ENCODE measurements at regions of chr4 and their contacts with region 1.

Region 1: GRCh38 chr4:113684534-113685091 is 76.9 kb downstream of the CAMK2D start:
- DNase-seq: peak; percentile 72
- H3K4me3 Mint-ChIP-seq: peak overlapping the region; percentile 42
- H3K27ac Mint-ChIP-seq: peak overlapping the region; percentile 93
- H3K4me1 Mint-ChIP-seq: peaks cover 71% of the 10 kb centered on the region
- H3K27me3 Mint-ChIP-seq: no peaks in the 10 kb centered on the region

Region 2: GRCh38 chr4:112284662-112285411 is 1399.8 kb before region 1 on chr4:
- CTCF ChIA-PET with region 1: no interaction called
- POLR2A ChIA-PET with region 1: no interaction called
- intact Hi-C with region 1: loop called (anchors 5 kb)
- DNase-seq: peak; percentile 39
- H3K4me3 Mint-ChIP-seq: peak overlapping the region; percentile 94
- H3K27ac Mint-ChIP-seq: peak overlapping the region; percentile 97
- H3K4me1 Mint-ChIP-seq: peaks cover 69% of the 10 kb centered on the region
- H3K27me3 Mint-ChIP-seq: no peaks in the 10 kb centered on the region

Region 3: DNA sequence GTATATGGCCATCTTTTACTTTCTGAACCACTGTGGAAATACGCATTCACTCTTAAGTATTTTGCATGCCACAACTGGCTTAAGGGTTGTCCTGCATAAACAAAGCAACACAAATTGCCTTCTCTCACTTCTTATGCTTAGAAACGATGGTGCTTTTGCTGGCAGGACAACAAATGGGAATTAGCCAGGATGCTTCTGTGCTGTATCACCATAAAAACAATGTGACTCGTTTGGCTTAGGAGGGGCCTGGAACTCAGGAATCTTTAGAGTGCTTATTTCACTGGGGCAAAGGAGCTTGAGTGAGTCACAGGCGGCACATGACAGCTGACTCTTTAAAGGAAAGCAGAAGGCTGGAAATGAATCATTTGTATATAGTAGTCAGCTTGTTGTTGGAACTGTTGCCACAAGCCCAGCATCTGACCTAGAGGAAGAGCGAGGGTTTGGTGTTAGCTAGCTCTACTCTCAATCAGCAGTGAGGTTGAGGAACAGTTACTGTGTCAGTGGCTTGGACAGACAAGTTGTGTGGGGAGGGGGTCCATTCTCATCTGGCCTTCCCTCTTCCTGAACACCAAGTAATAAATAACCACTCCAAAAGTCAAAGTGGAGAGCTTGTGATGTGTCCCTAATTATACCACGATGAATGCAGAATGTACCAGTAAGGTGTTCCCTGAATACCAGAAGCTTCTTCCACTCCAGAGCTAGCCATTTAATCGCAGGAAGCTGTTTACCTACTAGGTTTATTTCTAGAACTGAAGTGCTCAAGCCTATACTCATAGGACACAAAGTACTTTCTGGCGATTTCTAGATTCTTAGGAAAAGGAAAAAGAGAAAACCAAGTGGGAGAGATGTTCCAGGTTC is 216.2 kb before region 1 on chr4:
- CTCF ChIA-PET with region 1: no interaction called
- POLR2A ChIA-PET with region 1: interaction called, 4 read pairs
- intact Hi-C with region 1: loop called (anchors 2 kb)
- DNase-seq: peak; percentile 66
- H3K4me3 Mint-ChIP-seq: no peak overlapping the region
- H3K27ac Mint-ChIP-seq: peak overlapping the region; percentile 61
- H3K4me1 Mint-ChIP-seq: peaks cover 30% of the 10 kb centered on the region
- H3K27me3 Mint-ChIP-seq: no peaks in the 10 kb centered on the region

Region 4: GRCh38 chr4:113547487-113548042 is 137.0 kb before region 1 on chr4:
- CTCF ChIA-PET with region 1: interaction called, 12 read pairs
- POLR2A ChIA-PET with region 1: interaction called, 4 read pairs
- intact Hi-C with region 1: loop called (anchors 1 kb)
- DNase-seq: peak; percentile 95
- H3K4me3 Mint-ChIP-seq: peak overlapping the region; percentile 12
- H3K27ac Mint-ChIP-seq: peak overlapping the region; percentile 21
- H3K4me1 Mint-ChIP-seq: peaks cover 21% of the 10 kb centered on the region
- H3K27me3 Mint-ChIP-seq: no peaks in the 10 kb centered on the region

Region 5: DNA sequence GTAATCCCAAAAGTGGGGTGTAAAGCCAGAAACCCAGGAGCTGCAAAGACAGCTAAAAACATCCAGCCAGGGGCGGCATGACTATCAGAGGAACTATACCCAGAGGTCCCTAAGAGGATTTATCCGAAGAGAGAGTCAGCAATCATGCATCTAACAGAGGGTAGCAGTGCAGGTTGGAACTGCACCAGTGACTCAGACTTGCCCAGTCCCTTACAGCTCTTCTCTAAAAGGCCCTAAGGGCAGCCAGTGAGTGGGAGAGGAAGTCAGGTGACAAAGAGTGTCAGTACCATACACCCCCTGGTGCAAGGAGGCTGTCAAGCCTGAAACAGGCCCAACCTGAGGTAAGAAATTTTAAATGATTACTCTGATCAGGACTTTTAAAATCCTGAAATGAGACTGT is 11.2 kb before region 1 on chr4:
- CTCF ChIA-PET with region 1: interaction called, 7 read pairs
- POLR2A ChIA-PET with region 1: interaction called, 3 read pairs
- intact Hi-C with region 1: loop called (anchors 1 kb)
- DNase-seq: peak; percentile 74
- H3K4me3 Mint-ChIP-seq: no peak overlapping the region
- H3K27ac Mint-ChIP-seq: peak overlapping the region; percentile 58
- H3K4me1 Mint-ChIP-seq: peaks cover 47% of the 10 kb centered on the region
- H3K27me3 Mint-ChIP-seq: no peaks in the 10 kb centered on the region

Region 6: DNA sequence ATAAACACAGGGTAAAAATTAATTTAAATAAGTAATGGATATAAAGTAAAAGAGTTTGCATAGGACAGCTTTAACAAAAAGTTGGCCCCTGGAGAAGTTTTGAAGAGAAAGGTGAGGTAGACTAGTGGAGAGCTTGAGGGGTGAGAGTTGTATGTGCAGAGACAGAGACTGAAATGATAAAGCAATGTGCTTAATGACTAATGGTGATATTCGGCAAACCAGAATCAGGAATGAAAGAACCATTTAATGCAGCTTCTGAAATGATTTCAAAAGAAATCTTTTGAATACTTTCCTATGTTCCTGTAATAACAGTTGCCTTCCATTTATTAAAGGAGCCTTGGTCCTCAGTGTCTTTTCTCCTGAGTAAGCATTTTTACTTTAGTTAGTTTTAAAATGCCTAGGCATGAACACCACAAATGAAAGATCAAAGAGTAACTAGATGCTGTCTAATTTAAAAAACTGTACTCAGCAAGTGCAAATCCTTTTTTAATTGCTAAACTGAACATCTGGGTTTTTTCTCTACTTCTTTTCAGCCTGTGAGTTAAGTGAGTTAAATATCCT is 48.4 kb after region 1 on chr4:
- CTCF ChIA-PET with region 1: interaction called, 4 read pairs
- POLR2A ChIA-PET with region 1: interaction called, 5 read pairs
- intact Hi-C with region 1: loop called (anchors 1 kb)
- DNase-seq: no peak
- H3K4me3 Mint-ChIP-seq: peak overlapping the region; percentile 0
- H3K27ac Mint-ChIP-seq: peak overlapping the region; percentile 26
- H3K4me1 Mint-ChIP-seq: peaks cover 62% of the 10 kb centered on the region
- H3K27me3 Mint-ChIP-seq: no peaks in the 10 kb centered on the region

Region 7: DNA sequence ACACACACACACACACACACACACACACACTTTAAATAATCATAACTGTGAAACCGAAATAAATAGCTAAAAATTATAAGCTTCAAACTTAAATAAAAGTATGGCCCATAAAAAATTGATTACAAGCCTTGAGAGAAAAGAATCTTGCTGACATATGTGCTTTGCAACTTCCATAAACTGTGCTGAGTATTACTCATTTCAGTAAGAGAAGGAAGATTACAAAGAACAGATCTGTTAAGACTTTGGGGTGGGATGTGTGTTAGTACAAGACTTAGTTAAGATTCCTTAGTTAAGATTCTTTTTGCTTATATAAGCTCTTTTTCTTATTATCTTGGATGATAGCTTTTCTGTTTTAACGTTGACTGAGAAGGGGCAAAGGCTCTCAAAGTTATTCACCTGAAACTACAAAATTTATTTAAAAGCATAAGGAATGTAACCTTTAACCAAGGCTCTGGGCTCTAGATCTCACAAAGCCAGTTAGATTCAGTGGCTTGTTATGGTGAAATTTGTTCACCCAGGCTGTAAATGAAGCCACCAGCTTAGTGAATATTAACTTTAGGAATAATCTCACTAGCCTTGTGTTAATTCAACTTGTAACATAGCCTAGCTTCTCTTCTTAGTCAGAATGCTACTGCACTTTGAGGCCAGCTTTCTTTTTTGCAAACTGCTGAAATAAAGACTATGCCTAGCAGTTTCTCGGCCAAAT is 236.6 kb after region 1 on chr4:
- CTCF ChIA-PET with region 1: no interaction called
- POLR2A ChIA-PET with region 1: no interaction called
- intact Hi-C with region 1: no loop called
- DNase-seq: no peak
- H3K4me3 Mint-ChIP-seq: no peak overlapping the region
- H3K27ac Mint-ChIP-seq: no peak overlapping the region
- H3K4me1 Mint-ChIP-seq: peaks cover 6% of the 10 kb centered on the region
- H3K27me3 Mint-ChIP-seq: peaks cover 5% of the 10 kb centered on the region